Tibial artery (tissue), 4 donors: ENCODE measurements at regions of chr2 and their contacts with region 1.

Region 1: DNA sequence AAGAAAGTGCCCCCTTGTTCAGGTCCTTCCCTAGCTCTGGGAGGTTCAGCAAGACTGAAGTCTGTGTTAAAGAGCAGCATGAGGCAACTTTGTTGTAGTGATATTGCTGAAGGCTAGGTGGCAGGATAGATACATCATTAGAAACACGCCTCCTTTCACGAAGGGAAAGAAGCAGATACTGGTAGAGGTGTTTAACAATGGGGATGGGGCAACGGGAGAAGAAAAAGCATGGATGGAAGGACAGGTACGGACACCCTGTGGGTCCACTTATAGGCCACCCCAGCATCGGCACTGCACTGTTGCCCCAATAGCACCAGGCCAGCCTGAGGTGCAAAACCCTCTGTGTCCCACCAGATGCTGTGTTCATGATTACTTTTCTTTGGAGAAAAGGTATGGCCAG is 3.5 kb upstream of the IGFBP5 start:
- DNase-seq: peak in 1 of 2 donors; percentile 20
- H3K4me3 ChIP-seq: no peak overlapping the region
- H3K27ac ChIP-seq: peak overlapping the region; percentile 55 to 86
- H3K4me1 ChIP-seq: peaks cover 0 to 81% (median 50%) of the 10 kb centered on the region in 4 donors
- H3K27me3 ChIP-seq: no peaks in the 10 kb centered on the region
- CTCF ChIP-seq: peak; percentile 66 to 75

Region 2: DNA sequence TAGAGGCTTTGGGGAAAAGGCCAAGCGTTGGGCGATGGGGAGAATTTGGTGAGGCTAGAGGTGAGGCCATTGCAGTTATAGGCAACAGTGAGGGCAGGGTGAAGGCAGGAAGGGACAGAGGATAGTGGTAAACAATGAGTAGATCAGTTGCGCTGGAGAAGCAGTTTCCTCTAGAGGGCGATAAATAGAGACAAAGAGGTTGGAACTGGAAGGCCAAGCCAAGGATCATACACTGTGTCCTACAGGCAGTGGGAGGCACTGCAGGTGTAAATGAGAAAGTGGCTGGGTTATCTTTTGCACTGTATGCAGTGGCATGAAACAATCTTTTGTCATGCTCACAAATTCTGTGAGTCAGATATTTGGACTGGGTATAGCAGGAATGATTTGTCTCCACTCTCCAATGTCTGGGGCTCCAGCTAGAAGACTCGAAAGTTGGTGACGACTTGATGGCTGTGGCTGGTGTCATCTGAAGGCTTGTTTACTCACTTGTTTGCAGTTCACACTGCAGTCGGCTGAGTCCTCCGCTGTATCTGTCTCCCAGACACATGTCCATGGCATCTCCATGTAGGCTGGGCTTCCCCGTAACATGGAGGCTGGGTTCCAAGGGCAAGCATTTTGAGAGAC is 78.9 kb after region 1 on chr2:
- intact Hi-C with region 1: no loop called
- DNase-seq: no peak
- H3K4me3 ChIP-seq: no peak overlapping the region
- H3K27ac ChIP-seq: no peak overlapping the region
- H3K4me1 ChIP-seq: peaks cover 3 to 28% (median 15%) of the 10 kb centered on the region in 4 donors
- H3K27me3 ChIP-seq: no peaks in the 10 kb centered on the region
- CTCF ChIP-seq: peak; percentile 25 to 27

Region 3: DNA sequence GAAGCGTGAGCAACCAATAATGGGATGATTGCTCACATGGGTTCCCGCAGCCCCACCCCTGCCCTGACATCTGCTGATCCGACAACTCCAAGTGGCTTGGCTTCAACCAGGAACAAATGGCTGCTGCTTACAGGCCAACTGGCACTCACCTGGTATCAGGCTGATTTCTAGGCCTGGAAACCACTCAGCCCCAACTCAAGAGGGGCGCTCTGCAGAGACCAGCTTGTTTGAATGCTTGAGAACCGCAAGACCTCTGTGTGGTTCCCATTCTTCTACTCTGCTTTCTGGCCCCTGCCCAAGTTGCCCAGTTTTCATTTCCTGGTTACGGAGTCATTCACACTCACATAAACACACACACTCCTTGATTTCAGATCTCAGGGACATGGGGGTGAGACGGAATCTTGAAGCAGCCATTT is 109.0 kb after region 1 on chr2:
- intact Hi-C with region 1: no loop called
- DNase-seq: no peak
- H3K4me3 ChIP-seq: no peak overlapping the region
- H3K27ac ChIP-seq: no peak overlapping the region
- H3K4me1 ChIP-seq: peaks cover 0 to 41% (median 12%) of the 10 kb centered on the region in 4 donors
- H3K27me3 ChIP-seq: no peaks in the 10 kb centered on the region
- CTCF ChIP-seq: no peak

Region 4: DNA sequence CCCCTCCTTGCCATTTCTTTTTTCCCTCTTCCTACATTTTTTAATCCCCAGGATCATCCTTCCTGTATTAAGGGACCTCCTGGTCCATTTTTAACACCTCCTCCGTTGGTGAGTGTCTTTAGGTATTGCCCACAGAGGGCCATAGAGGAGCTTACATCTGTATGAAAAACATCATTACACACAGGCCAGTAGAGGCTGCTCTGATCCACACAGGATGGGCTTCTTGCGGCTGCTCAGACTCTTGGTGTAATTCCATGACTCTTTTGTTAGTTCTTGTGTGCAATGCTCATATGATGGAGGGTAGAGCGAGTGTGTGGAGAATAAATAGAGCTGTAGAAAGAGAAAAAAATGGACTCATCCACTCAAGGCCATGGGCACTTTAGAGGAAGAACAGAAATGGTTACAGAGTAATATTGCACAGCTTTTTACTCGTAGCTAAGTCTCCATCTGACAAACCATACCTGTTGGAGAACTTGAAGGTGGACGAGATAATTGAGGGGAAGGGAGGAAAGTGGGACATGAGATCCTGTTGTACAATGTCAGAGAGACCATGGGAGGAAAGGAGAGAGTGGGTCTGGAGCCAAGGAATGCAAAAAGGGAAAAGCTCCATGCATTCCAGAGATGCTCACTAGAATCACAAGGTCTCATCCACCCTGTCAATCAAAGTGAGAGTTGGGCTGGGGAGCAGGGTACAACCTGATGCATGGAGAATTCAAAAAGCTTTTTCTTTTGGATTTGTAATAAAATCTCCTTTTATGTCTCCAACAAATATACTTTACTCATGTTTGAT is 290.6 kb after region 1 on chr2:
- intact Hi-C with region 1: loop called (anchors 10 kb)
- DNase-seq: no peak
- H3K4me3 ChIP-seq: no peak overlapping the region
- H3K27ac ChIP-seq: no peak overlapping the region
- H3K4me1 ChIP-seq: peaks cover 0 to 51% (median 18%) of the 10 kb centered on the region in 4 donors
- H3K27me3 ChIP-seq: no peaks in the 10 kb centered on the region
- CTCF ChIP-seq: no peak

Region 5: GRCh38 chr2:217162533-217162932 is 463.6 kb after region 1 on chr2:
- intact Hi-C with region 1: loop called (anchors 5 kb)
- DNase-seq: no peak
- H3K4me3 ChIP-seq: no peak overlapping the region
- H3K27ac ChIP-seq: no peak overlapping the region
- H3K4me1 ChIP-seq: peaks cover 0 to 13% (median 3%) of the 10 kb centered on the region in 4 donors
- H3K27me3 ChIP-seq: no peaks in the 10 kb centered on the region
- CTCF ChIP-seq: no peak

Region 6: DNA sequence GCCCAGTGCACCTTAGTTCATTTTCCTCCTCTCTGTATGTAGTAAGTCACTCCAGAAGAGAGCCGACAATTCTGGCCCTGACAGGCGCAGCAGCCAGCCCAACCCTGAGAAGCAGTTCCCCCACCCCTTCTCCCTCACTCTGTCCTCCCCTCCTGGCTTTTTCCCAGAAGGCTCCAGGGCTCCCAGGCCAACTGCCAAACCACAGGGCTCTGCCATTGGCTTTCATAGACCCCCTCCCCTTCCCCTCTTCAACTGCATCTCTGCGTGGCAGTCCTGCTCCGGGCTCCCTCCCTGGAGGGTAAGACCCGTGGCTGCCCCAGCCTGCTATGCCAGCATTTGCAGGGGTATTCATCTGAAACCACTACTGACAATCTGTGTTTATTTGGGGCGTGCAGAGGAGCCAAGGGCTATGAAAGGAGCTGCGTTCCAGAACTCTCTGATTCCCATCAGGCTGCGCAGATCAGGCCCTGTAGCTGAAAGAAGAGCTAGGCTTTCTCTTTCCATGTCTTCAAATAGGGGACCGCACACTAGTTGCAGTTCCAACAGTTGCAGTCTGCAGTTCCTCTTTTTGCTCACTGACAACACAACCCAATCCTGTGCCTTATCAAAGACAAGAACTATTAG is 549.5 kb after region 1 on chr2:
- intact Hi-C with region 1: loop called (anchors 10 kb)
- DNase-seq: peak; percentile 67 to 92
- H3K4me3 ChIP-seq: peak overlapping the region; percentile 2 to 29
- H3K27ac ChIP-seq: peak overlapping the region; percentile 84 to 87
- H3K4me1 ChIP-seq: peaks cover 0 to 54% (median 32%) of the 10 kb centered on the region in 4 donors
- H3K27me3 ChIP-seq: no peaks in the 10 kb centered on the region
- CTCF ChIP-seq: no peak

Region 7: GRCh38 chr2:217510771-217511291 is 811.9 kb after region 1 on chr2:
- intact Hi-C with region 1: loop called (anchors 5 kb)
- DNase-seq: peak; percentile 47 to 75
- H3K4me3 ChIP-seq: no peak overlapping the region
- H3K27ac ChIP-seq: peak overlapping the region in 1 of 2 donors; percentile 26
- H3K4me1 ChIP-seq: peaks cover 0 to 12% (median 5%) of the 10 kb centered on the region in 4 donors
- H3K27me3 ChIP-seq: no peaks in the 10 kb centered on the region
- CTCF ChIP-seq: peak; percentile 79 to 80

Region 8: DNA sequence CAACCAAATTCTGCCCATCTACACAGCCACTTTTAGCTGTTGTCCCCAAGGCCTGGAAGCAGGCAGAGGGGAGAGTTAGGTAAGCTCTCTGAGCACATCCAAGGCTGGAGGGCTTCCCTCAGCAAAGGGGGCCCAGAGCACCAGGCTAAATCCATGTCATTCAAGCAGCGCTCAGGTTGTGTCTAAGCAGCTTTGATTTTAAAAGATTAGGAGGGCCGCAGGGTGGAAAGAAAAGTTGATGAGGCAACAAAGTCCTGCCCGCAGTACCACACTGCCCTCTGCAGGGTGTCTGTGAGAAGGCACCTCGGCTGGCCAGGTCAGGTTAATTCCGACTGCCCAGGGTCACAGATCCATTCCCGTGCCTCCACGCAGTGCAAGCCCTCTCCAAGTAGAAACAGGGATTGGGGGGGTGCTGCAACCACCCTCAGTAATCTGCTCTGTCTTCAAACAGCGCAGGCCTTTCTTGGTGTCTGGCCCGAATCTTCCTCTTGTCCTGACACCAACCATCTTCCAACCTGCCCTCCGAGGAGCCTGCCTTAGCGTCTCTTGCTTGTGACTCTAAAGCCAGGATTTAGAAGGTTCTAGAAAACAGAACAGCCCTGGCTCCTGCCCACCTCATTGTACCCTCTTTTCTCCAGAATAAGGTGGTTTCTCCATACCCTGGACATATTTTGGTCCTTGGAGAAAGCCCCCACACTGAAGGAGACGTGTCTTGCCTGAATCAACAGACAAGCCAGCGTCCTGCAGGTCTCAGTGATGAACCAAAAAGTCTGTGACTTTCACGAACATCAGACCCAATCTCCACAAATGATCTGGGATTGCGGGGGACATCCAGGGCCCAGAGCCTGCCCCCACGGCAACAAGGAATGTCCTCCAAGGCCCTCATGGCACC is 1014.7 kb after region 1 on chr2:
- intact Hi-C with region 1: loop called (anchors 5 kb)
- DNase-seq: peak; percentile 77 to 90
- H3K4me3 ChIP-seq: no peak overlapping the region
- H3K27ac ChIP-seq: peak overlapping the region; percentile 49 to 59
- H3K4me1 ChIP-seq: peaks cover 0 to 34% (median 23%) of the 10 kb centered on the region in 4 donors
- H3K27me3 ChIP-seq: no peaks in the 10 kb centered on the region
- CTCF ChIP-seq: peak; percentile 97